Tibial artery (tissue), 4 donors: ENCODE measurements at regions of chr4 and their contacts with region 1.

Region 1: DNA sequence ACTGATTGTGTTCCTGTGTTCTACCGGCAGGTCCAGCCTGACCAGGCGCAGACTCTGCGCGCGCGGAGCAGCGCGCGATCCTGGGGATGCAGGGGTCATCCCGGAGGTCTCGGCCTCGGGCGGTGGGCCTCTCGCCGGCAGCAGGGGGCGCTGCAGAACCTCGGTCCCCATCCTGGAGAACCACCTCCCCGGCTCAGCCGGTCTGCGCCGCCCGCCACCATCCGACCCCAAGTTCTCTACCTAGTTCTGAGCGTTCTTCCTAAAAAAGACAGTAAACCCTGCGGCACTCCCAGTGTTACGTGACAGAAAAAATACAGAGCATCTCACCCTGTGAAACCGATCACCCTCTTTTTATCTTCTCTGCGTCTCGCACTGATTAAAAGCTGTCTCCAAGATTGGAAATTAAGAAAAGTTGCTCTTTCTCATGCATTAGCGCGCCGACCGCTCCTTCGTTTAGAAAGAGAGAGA is 1.6 kb downstream of the TRPC3 start:
- DNase-seq: peak; percentile 49 to 76
- H3K4me3 ChIP-seq: peak overlapping the region; percentile 59 to 76
- H3K27ac ChIP-seq: peak overlapping the region; percentile 23 to 24
- H3K4me1 ChIP-seq: peaks cover 0 to 24% (median 3%) of the 10 kb centered on the region in 4 donors
- H3K27me3 ChIP-seq: no peaks in the 10 kb centered on the region
- CTCF ChIP-seq: peak; percentile 65 to 66

Region 2: GRCh38 chr4:121696581-121697461 is 253.4 kb before region 1 on chr4 and contains the start of gene ANXA5:
- intact Hi-C with region 1: no loop called
- DNase-seq: peak; percentile 82 to 95
- H3K4me3 ChIP-seq: peak within 1 kb of the TSS; percentile 70 to 98
- H3K27ac ChIP-seq: peak within 1 kb of the TSS; percentile 95 to 100
- H3K4me1 ChIP-seq: peaks cover 0 to 48% (median 15%) of the 10 kb centered on the region in 4 donors
- H3K27me3 ChIP-seq: no peaks in the 10 kb centered on the region
- CTCF ChIP-seq: peak in 1 of 2 experiments; percentile 14

Region 3: DNA sequence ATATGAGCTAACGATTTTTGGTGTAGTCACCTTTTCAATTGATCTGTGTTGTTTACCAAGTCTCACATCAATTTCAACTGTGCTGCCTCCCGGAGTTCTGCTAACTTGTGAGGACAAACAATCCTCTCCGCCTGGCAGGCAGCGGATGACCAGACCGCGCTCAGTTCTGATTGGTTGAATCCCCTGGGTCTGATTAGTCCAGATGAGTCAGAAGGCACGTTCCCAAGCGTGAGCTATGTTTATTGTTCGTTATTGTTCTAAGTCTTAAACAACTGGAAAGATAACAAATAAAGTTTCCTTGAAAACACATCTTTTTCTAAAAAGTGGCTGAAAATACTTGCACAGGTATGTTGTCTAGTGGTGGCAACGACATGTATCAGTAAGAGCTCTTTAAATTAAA is 39.5 kb after region 1 on chr4:
- intact Hi-C with region 1: no loop called
- DNase-seq: no peak
- H3K4me3 ChIP-seq: no peak overlapping the region
- H3K27ac ChIP-seq: no peak overlapping the region
- H3K4me1 ChIP-seq: peaks cover 0 to 4% (median 0%) of the 10 kb centered on the region in 4 donors
- H3K27me3 ChIP-seq: no peaks in the 10 kb centered on the region
- CTCF ChIP-seq: no peak

Region 4: DNA sequence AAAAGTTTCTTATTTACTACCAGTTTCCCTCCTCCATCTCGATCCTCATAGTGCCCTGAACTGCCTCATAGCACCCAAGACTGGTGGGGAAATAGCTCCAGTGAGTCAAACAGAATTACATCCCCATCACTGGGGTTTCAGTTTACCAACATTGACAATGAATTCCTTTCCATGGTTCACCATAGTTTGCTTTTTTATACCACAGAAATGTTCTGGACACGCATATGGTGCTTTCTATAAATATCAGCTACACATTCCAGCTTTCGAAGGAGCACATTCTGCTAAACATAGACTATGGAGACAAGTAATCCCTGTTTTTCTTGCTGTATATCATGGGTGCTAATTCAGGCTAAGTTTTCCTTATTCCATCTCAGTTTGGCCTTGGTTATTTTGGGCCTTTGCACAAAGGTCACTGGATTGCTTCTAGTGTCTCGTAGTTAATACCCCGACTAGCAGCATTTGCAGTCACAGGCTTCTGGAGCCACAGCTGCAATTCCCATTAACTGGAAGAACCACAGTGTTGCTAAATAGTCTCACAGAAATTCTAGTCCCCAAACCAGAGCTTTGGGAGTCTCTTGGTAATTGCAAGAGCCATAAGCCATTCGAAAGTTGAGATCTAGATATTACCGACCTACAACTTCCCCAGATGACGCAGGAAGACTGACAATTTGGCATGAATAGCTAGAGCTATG is 55.0 kb after region 1 on chr4:
- intact Hi-C with region 1: no loop called
- DNase-seq: no peak
- H3K4me3 ChIP-seq: peak overlapping the region; percentile 27
- H3K27ac ChIP-seq: peak overlapping the region; percentile 44 to 66
- H3K4me1 ChIP-seq: peaks cover 0 to 36% (median 0%) of the 10 kb centered on the region in 4 donors
- H3K27me3 ChIP-seq: no peaks in the 10 kb centered on the region
- CTCF ChIP-seq: no peak

Region 5: GRCh38 chr4:122151982-122152710 is 201.9 kb after region 1 on chr4 and contains the start of gene BLTP1:
- intact Hi-C with region 1: loop called (anchors 2 kb)
- DNase-seq: peak; percentile 87 to 93
- H3K4me3 ChIP-seq: peak within 1 kb of the TSS; percentile 88 to 90
- H3K27ac ChIP-seq: peak within 1 kb of the TSS; percentile 95 to 96
- H3K4me1 ChIP-seq: peaks cover 0 to 26% (median 1%) of the 10 kb centered on the region in 4 donors
- H3K27me3 ChIP-seq: no peaks in the 10 kb centered on the region
- CTCF ChIP-seq: no peak